H1 (cell line): ENCODE measurements at regions of chr6 and their contacts with region 1.

Region 1: GRCh38 chr6:110389689-110390382 is 25.5 kb downstream of the DDO start:
- DNase-seq: no peak
- H3K4me3 ChIP-seq: no peak overlapping the region
- H3K27ac ChIP-seq: no peak overlapping the region
- H3K4me1 ChIP-seq: peaks cover 0 to 1% (median 0%) of the 10 kb centered on the region in 4 experiments; a peak in 1 of 7 replicates
- H3K27me3 ChIP-seq: no peaks in the 10 kb centered on the region
- CTCF ChIP-seq: no peak
- EP300 ChIP-seq: no peak
- POLR2A ChIP-seq: no peak
- RAD21 ChIP-seq: no peak

Region 2: DNA sequence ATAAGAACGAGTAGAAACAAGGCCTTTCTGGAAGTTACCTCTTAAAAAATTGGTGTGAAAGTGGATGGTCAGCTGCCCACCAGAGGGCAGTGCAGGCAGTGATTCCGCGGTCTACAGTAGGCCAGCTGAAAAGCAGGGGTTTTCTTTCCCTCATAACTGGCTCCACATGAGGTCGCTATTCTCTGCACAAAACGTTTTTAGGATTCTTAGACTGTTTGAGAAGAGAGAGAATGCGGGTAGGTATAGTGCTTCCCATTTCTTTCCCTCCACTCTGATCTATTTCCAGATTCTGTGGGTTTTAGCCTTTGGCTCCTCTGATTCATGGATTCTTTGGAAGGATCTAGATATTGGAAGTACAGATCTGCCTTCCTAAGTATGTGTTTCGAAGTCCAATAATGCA is 684.6 kb before region 1 on chr6:
- CTCF ChIA-PET with region 1: interaction called, 18 read pairs
- POLR2A ChIA-PET with region 1: no interaction called
- DNase-seq: peak; percentile 75 to 83
- H3K4me3 ChIP-seq: no peak overlapping the region
- H3K27ac ChIP-seq: no peak overlapping the region
- H3K4me1 ChIP-seq: peaks cover 0 to 5% (median 3%) of the 10 kb centered on the region in 4 experiments; a peak in 5 of 7 replicates
- H3K27me3 ChIP-seq: no peaks in the 10 kb centered on the region
- CTCF ChIP-seq: peak; percentile 88 to 99 (median 98)
- EP300 ChIP-seq: no peak
- POLR2A ChIP-seq: no peak
- RAD21 ChIP-seq: peak; percentile 99 to 100

Region 3: GRCh38 chr6:110179401-110180227 is 210.2 kb before region 1 on chr6 and contains the start of gene WASF1:
- CTCF ChIA-PET with region 1: interaction called, 45 read pairs
- POLR2A ChIA-PET with region 1: interaction called, 3 read pairs
- DNase-seq: peak; percentile 95 to 96
- H3K4me3 ChIP-seq: peak within 1 kb of the TSS; percentile 85 to 100 (median 100)
- H3K27ac ChIP-seq: peak within 1 kb of the TSS; percentile 92
- H3K4me1 ChIP-seq: peaks cover 0 to 2% (median 0%) of the 10 kb centered on the region in 4 experiments; a peak in 2 of 7 replicates
- H3K27me3 ChIP-seq: no peaks in the 10 kb centered on the region
- CTCF ChIP-seq: no peak
- EP300 ChIP-seq: peak in 1 of 2 experiments; percentile 94; a peak in 2 of 3 replicates
- POLR2A ChIP-seq: no peak
- RAD21 ChIP-seq: no peak
- total RNA-seq, gene WASF1: 37.2 and 37.6 TPM in 2 replicates

Region 4: GRCh38 chr6:110217266-110217665 is 172.6 kb before region 1 on chr6:
- CTCF ChIA-PET with region 1: interaction called, 10 read pairs
- POLR2A ChIA-PET with region 1: no interaction called
- DNase-seq: no peak
- H3K4me3 ChIP-seq: no peak overlapping the region
- H3K27ac ChIP-seq: no peak overlapping the region
- H3K4me1 ChIP-seq: no peaks in the 10 kb centered on the region
- H3K27me3 ChIP-seq: no peaks in the 10 kb centered on the region
- CTCF ChIP-seq: no peak
- EP300 ChIP-seq: no peak
- POLR2A ChIP-seq: no peak
- RAD21 ChIP-seq: no peak

Region 5: GRCh38 chr6:110341663-110342596 is 47.9 kb before region 1 on chr6:
- CTCF ChIA-PET with region 1: interaction called, 10 read pairs
- POLR2A ChIA-PET with region 1: no interaction called
- DNase-seq: peak in 1 of 2 experiments; percentile 57
- H3K4me3 ChIP-seq: no peak overlapping the region
- H3K27ac ChIP-seq: no peak overlapping the region
- H3K4me1 ChIP-seq: no peaks in the 10 kb centered on the region; a peak in 1 of 7 replicates
- H3K27me3 ChIP-seq: peaks cover 0 to 1% (median 0%) of the 10 kb centered on the region in 4 experiments; a peak in 1 of 7 replicates
- CTCF ChIP-seq: peak; percentile 46 to 86 (median 56)
- EP300 ChIP-seq: no peak
- POLR2A ChIP-seq: no peak
- RAD21 ChIP-seq: peak; percentile 64 to 69

Region 6: DNA sequence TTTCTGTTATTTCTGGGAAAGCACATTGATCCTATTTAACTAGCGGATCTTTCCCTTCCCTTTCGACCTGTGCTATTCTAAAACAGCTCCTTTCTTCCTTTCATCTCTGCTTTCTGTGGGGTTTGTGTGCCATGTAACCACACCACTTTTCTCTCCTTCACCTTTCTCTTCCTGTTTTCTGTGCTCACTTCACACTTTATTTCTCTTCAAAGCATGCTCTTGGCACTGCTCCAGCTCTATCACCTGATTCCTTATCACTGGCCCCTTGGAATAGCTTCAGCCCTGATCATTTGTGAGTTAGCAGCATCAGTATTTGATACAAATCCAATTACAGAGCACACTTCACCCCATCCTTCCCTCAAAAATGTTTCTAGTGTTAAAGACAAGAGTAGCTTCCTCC is 23.6 kb before region 1 on chr6:
- CTCF ChIA-PET with region 1: interaction called, 14 read pairs
- POLR2A ChIA-PET with region 1: no interaction called
- DNase-seq: no peak
- H3K4me3 ChIP-seq: no peak overlapping the region
- H3K27ac ChIP-seq: no peak overlapping the region
- H3K4me1 ChIP-seq: peaks cover 0 to 13% (median 3%) of the 10 kb centered on the region in 4 experiments; a peak in 3 of 7 replicates
- H3K27me3 ChIP-seq: no peaks in the 10 kb centered on the region
- CTCF ChIP-seq: no peak
- EP300 ChIP-seq: no peak
- POLR2A ChIP-seq: no peak
- RAD21 ChIP-seq: no peak

Region 7: GRCh38 chr6:110404607-110405006 is 14.8 kb after region 1 on chr6:
- CTCF ChIA-PET with region 1: interaction called, 24 read pairs
- POLR2A ChIA-PET with region 1: interaction called, 4 read pairs
- DNase-seq: no peak
- H3K4me3 ChIP-seq: no peak overlapping the region
- H3K27ac ChIP-seq: no peak overlapping the region
- H3K4me1 ChIP-seq: no peaks in the 10 kb centered on the region
- H3K27me3 ChIP-seq: no peaks in the 10 kb centered on the region
- CTCF ChIP-seq: no peak
- EP300 ChIP-seq: no peak
- POLR2A ChIP-seq: no peak
- RAD21 ChIP-seq: no peak